Dendritic cell treated with granulocyte-macrophage colony-stimulating factor and Interleukin-4, amounts not matched to agents 40 ng/mL and 50 ng/mL, for 4 days (primary cell): ENCODE measurements at regions of chr2 and their contacts with region 1.

Region 1: DNA sequence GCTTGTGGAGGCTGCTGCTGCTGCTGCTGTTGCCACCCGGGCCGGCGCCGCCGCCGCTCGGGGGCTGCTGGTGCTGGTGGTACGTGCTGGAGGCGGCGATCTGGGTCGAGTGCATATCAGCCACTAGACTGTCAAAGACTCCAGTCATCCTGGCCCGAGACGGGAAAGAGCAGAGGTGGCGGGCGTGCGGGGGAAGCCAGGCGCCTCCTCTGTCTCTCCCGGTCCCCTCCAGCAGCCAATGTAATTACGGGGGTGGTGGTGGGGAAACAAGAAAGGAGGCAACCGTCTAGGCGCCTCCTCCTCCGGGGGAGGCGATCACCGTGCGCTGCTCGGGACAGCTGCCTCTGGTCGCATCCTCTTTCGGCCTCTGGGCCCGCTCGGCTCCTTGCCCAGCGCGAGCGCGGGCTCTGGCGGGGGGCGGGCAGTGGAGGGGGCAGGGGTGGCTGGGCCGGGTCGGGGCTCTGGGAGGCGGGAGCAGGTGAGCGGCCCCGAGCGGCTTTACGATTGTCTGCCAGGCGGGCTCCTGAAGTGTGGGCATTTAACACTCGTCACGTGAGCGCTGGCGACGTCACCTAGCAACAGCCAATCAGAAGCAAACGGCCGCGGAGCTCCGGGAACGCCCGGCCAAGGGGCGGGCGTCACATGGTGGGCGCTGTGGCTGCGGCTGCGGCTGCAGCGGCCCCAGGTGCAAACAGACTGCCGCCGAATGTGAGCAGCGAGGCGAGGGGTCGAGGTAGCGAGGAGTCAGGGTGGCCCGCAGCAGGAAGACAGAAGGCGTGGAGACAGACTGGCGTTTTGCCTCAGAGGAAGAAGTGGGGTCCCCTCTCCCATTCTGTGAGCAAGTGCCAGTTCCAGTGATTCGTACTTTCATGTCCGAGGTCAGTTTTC is at the start of gene DLX2:
- H3K4me3 Mint-ChIP-seq: peak within 1 kb of the TSS; percentile 89
- H3K27ac Mint-ChIP-seq: peak within 1 kb of the TSS; percentile 57
- H3K4me1 Mint-ChIP-seq: peaks cover 70% of the 10 kb centered on the region
- H3K27me3 Mint-ChIP-seq: peaks cover 89% of the 10 kb centered on the region

Region 2: GRCh38 chr2:171509945-171510731 is 592.5 kb before region 1 on chr2:
- intact Hi-C with region 1: no loop called
- H3K4me3 Mint-ChIP-seq: no peak overlapping the region
- H3K27ac Mint-ChIP-seq: no peak overlapping the region
- H3K4me1 Mint-ChIP-seq: peaks cover 33% of the 10 kb centered on the region
- H3K27me3 Mint-ChIP-seq: no peaks in the 10 kb centered on the region

Region 3: DNA sequence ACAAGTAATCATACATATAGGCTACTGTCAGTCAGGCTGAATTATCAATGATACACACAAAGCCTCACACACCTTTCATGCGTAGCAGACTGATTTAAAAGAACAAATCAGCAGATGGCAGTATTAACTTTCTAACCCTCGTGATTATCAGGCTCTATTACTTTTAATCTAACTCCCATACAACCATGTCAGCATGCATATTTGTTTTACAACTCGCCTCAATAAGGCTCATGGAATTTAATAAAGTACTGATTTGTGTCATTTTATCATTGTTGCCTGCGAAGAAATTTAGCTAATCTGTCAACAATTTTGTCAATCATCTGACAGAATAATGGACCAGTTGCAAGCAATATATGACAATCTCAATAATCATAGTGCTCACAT is 291.4 kb before region 1 on chr2:
- intact Hi-C with region 1: loop called (anchors 2 kb)
- H3K4me3 Mint-ChIP-seq: no peak overlapping the region
- H3K27ac Mint-ChIP-seq: no peak overlapping the region
- H3K4me1 Mint-ChIP-seq: no peaks in the 10 kb centered on the region
- H3K27me3 Mint-ChIP-seq: no peaks in the 10 kb centered on the region

Region 4: DNA sequence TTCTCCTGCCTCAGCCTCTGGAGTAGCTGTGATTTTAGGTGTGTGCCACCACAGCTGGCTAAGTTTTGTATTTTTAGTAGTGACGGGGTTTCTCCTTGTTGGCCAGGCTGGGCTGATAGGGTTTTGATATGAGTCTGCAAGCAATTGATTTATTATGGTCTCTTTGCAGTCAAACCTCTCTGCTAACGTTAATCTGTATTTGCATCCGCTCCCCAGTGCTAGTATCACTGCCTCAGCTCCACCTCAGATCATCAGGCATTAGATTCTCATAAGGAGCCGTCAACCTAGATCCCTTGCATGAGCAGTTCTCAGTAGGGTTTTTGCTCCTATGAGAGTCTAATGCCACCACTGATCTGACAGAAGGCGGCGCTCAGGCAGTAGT is 161.3 kb before region 1 on chr2:
- intact Hi-C with region 1: loop called (anchors 1 kb)
- H3K4me3 Mint-ChIP-seq: no peak overlapping the region
- H3K27ac Mint-ChIP-seq: peak overlapping the region; percentile 34
- H3K4me1 Mint-ChIP-seq: peaks cover 35% of the 10 kb centered on the region
- H3K27me3 Mint-ChIP-seq: no peaks in the 10 kb centered on the region

Region 5: DNA sequence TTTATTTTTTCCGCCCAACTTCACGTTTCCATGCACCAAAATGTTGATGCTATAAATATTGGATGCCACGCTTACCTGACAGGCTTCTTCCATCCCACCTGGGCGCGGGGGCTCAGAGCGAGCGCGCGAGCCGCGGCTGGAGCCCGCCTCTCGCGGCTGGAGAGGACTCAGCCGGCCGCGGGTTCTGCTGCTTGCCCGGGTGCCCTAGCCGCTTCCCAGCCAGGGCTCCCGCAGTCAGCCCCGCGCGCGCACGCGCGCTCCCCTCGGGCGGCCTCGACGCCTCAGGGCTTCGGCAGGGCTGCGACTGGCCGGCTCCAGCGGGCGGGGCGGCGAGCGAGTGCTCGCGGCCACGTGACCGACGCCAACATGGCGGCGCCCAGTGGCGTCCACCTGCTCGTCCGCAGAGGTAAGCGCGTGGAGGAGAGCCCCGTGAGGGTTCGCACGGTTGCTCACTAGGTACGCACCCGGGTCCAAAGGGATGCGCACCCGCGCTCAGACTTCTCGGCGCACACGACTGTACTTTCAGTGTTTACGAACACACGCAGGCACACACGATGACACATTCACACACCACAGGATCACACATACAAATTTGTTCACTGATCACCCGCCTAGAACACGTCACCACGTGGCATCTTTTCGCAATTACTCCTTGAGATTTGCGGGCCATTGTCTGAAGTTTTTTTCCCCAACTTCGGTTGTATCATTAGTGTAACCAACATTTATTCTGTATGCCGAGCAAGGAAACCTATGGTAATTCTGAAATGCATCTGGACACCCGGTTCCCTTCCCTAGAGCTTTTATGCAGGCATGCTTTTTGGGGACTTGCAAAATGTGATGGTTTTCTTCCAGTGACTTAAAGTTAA is 102.8 kb before region 1 on chr2 and contains the start of gene METAP1D:
- intact Hi-C with region 1: loop called (anchors 10 kb)
- H3K4me3 Mint-ChIP-seq: peak within 1 kb of the TSS; percentile 92
- H3K27ac Mint-ChIP-seq: peak within 1 kb of the TSS; percentile 89
- H3K4me1 Mint-ChIP-seq: peaks cover 10% of the 10 kb centered on the region
- H3K27me3 Mint-ChIP-seq: peaks cover 12% of the 10 kb centered on the region